Caco-2 (cell line): ENCODE measurements at regions of chr11 and their contacts with region 1.

Region 1: GRCh38 chr11:83285771-83286528 is at the start of gene CCDC90B:
- DNase-seq: peak; percentile 98 to 99
- H3K4me3 ChIP-seq: peak within 1 kb of the TSS; percentile 93
- H3K4me3 Mint-ChIP-seq: peak within 1 kb of the TSS; percentile 73
- H3K27ac Mint-ChIP-seq: peak within 1 kb of the TSS; percentile 97
- H3K4me1 ChIP-seq: peaks cover 14% of the 10 kb centered on the region
- H3K4me1 Mint-ChIP-seq: peaks cover 7% of the 10 kb centered on the region
- H3K27me3 ChIP-seq: no peaks in the 10 kb centered on the region
- H3K27me3 Mint-ChIP-seq: no peaks in the 10 kb centered on the region
- CTCF ChIP-seq: peak in 1 of 2 experiments; percentile 66
- total RNA-seq, gene CCDC90B: 46.2 and 63.6 TPM in 2 replicates

Region 2: DNA sequence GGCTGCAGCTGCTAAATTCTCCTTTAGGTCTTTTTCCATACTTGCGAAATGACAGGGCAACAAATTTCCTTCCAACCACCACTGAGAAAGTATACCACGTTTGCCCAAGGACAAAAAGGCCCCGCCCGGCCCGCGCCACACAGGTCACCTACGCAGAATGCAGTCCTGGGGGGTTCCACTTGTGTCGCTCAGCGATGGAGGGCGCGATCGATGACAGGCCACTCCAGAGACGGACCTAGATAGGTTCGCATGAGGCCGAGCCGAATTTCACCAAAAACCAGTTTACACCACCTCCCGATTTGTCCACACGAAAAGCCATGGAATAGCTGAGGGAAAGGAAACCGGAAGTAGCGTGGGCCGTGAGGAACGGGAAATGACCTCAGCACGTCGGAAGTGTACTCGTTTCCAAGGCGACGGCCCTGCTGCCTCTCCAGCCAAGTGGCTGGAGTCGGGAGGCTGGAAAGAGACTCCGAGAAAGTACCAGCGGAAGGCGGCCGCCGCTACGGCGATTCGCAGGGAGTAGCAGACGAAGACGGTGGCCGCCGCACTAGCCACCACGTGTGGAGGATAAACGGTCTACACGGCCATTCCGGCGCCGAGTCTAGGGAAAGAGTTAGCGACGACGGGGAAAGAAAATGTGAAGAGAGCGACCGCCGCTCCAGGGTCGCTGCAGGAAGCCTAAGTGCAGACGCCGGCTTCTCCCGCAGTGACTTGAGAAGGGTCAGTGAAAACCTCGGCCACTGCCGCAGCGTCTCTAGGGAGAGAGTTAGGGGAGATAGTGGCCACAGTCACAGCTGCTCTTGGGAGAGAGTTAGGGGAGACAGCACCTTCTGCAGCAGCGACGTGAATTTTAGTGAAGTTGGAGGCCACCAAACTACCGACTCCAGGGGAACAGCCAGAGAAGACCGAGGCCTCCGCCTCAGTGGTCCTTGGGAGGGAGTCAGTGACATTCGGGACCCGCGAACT is 92.4 kb before region 1 on chr11 and contains the start of gene ANKRD42:
- CTCF ChIA-PET with region 1: no interaction called
- POLR2A ChIA-PET with region 1: interaction called, 4 read pairs
- intact Hi-C with region 1: loop called (anchors 1 kb)
- DNase-seq: peak; percentile 96 to 97
- H3K4me3 ChIP-seq: peak within 1 kb of the TSS; percentile 77
- H3K4me3 Mint-ChIP-seq: peak within 1 kb of the TSS; percentile 80
- H3K27ac Mint-ChIP-seq: peak within 1 kb of the TSS; percentile 89
- H3K4me1 ChIP-seq: peaks cover 7% of the 10 kb centered on the region; the same call in 1 of the 2 replicates
- H3K4me1 Mint-ChIP-seq: peaks cover 30% of the 10 kb centered on the region
- H3K27me3 ChIP-seq: no peaks in the 10 kb centered on the region
- H3K27me3 Mint-ChIP-seq: no peaks in the 10 kb centered on the region
- CTCF ChIP-seq: peak in 1 of 2 experiments; percentile 4
- total RNA-seq, gene ANKRD42: 8.3 and 9.0 TPM in 2 replicates

Region 3: DNA sequence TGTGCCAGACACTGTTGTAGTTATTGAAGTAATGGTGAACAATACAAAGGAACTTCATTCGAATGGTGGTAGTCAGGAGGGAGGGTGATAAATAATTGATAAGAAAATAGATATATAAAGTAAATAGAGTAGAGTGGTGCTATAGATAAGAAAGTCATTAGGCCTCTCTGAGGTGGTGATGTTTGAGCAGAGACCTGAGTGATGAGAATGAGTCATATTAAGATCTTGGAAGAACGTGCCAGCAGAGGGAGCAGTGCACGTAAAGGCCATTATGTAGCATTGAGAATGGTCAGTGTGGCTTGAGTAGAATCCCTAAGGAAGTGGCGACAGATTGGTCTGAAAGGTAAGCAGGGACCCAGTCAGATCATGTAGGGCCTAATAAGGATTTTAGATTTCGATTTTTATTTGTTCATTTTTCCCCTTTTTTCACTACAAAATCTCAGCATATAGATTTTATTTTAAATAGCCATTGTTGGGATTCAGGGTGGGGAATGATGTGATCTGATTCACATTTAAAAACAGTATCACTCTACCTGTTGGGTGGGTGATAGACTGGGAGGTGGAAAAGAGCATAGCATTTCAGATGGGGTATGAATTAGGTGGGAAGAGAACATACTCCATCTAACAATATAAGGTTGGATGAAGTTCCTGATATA is 44.5 kb before region 1 on chr11:
- CTCF ChIA-PET with region 1: no interaction called
- POLR2A ChIA-PET with region 1: interaction called, 3 read pairs
- intact Hi-C with region 1: loop called (anchors 1 kb)
- DNase-seq: peak; percentile 86
- H3K4me3 ChIP-seq: no peak overlapping the region
- H3K4me3 Mint-ChIP-seq: no peak overlapping the region
- H3K27ac Mint-ChIP-seq: no peak overlapping the region
- H3K4me1 ChIP-seq: peaks cover 9% of the 10 kb centered on the region
- H3K4me1 Mint-ChIP-seq: peaks cover 21% of the 10 kb centered on the region
- H3K27me3 ChIP-seq: no peaks in the 10 kb centered on the region
- H3K27me3 Mint-ChIP-seq: no peaks in the 10 kb centered on the region
- CTCF ChIP-seq: peak; percentile 86 to 92

Region 4: DNA sequence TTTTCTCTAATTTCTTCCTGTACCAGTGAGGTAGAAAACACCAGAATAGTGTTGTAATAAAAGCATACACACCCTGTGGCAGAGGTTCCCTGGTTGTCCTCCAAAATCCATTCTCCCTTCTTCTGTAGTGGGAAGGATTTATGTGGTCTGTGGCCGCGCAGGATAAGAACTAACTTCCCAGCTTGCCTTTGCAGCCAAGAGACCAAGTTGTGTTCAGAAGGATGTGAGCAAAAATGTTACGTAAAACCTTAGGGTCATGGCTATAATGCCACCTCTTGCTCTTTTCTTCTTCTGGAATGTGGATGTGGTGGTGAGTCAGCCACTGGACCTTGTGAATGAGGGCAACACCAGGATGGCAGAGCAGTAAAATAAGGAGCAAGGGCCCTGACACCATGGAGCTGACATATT is 28.2 kb before region 1 on chr11:
- CTCF ChIA-PET with region 1: no interaction called
- POLR2A ChIA-PET with region 1: interaction called, 5 read pairs
- intact Hi-C with region 1: loop called (anchors 1 kb)
- DNase-seq: peak in 1 of 2 experiments; percentile 63
- H3K4me3 ChIP-seq: no peak overlapping the region
- H3K4me3 Mint-ChIP-seq: no peak overlapping the region
- H3K27ac Mint-ChIP-seq: peak overlapping the region; percentile 87
- H3K4me1 ChIP-seq: peaks cover 43% of the 10 kb centered on the region
- H3K4me1 Mint-ChIP-seq: peaks cover 32% of the 10 kb centered on the region
- H3K27me3 ChIP-seq: no peaks in the 10 kb centered on the region
- H3K27me3 Mint-ChIP-seq: no peaks in the 10 kb centered on the region
- CTCF ChIP-seq: no peak

Region 5: GRCh38 chr11:83272627-83273026 is 13.3 kb before region 1 on chr11:
- CTCF ChIA-PET with region 1: no interaction called
- POLR2A ChIA-PET with region 1: interaction called, 5 read pairs
- intact Hi-C with region 1: loop called (anchors 1 kb)
- DNase-seq: no peak
- H3K4me3 ChIP-seq: no peak overlapping the region
- H3K4me3 Mint-ChIP-seq: no peak overlapping the region
- H3K27ac Mint-ChIP-seq: no peak overlapping the region
- H3K4me1 ChIP-seq: peaks cover 21% of the 10 kb centered on the region
- H3K4me1 Mint-ChIP-seq: peaks cover 27% of the 10 kb centered on the region
- H3K27me3 ChIP-seq: no peaks in the 10 kb centered on the region
- H3K27me3 Mint-ChIP-seq: no peaks in the 10 kb centered on the region
- CTCF ChIP-seq: no peak

Region 6: DNA sequence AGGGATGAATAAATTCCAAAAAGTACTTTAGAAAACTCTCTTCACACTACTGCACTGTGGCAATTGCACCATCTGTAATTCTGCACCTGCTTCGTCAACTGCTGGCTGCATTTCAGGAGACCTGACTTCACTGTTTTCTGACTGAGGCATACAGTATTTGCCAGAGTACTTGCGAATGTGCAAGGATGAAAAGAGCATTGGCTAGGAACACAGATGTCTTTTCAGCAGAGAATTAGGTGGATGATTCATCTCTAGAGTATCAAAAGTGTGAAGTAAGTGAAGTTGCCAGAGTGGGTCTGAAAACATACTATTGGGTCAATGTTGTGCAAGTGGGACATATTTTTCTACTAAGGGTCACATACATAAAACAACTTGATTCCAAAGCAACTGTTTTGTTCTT is 427.8 kb after region 1 on chr11:
- CTCF ChIA-PET with region 1: no interaction called
- POLR2A ChIA-PET with region 1: interaction called, 9 read pairs
- intact Hi-C with region 1: loop called (anchors 1 kb)
- DNase-seq: no peak
- H3K4me3 ChIP-seq: no peak overlapping the region
- H3K4me3 Mint-ChIP-seq: no peak overlapping the region
- H3K27ac Mint-ChIP-seq: peak overlapping the region; percentile 69
- H3K4me1 ChIP-seq: peaks cover 62% of the 10 kb centered on the region
- H3K4me1 Mint-ChIP-seq: peaks cover 64% of the 10 kb centered on the region
- H3K27me3 ChIP-seq: no peaks in the 10 kb centered on the region
- H3K27me3 Mint-ChIP-seq: no peaks in the 10 kb centered on the region
- CTCF ChIP-seq: no peak